GM12878 (cell line): ENCODE measurements at regions of chr2 and their contacts with region 1.

Region 1: GRCh38 chr2:153519257-153519875 is 40.8 kb upstream of the RPRM start:
- DNase-seq: peak; percentile 8
- ATAC-seq: peak; percentile 50
- H3K4me3 ChIP-seq: no peak overlapping the region
- H3K27ac ChIP-seq: no peak overlapping the region
- H3K4me1 ChIP-seq: no peaks in the 10 kb centered on the region
- H3K27me3 ChIP-seq: no peaks in the 10 kb centered on the region
- CTCF ChIP-seq: peak; percentile 59 to 70 (median 67); a peak in 5 of 6 replicates
- EP300 ChIP-seq: no peak
- POLR2A ChIP-seq: no peak
- RAD21 ChIP-seq: peak; percentile 76

Region 2: DNA sequence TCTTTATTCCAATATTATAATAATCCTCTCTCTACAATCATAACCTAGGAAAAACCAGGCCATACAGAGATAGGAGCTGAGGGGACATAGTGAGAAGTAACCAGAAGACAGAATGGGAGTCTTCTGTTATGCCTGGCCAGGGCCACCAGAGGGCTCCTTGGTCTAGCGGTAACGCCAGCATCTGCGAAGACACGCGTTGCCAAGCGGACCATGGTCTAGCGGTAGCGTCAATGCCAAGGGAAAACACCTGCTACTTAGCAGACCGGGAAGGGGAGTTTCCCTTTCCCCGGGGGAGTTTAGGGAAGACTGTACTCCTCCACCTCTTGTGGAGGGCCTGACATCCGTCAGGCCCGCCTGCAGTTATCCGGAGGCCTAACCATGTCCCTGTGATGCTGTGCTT is 764.3 kb before region 1 on chr2:
- CTCF ChIA-PET with region 1: no interaction called
- POLR2A ChIA-PET with region 1: no interaction called
- RAD21 ChIA-PET with region 1: no interaction called
- SMC1A ChIA-PET with region 1: no interaction called
- in situ Hi-C with region 1: no loop called
- intact Hi-C with region 1: loop called (anchors 5 kb)
- DNase-seq: peak; percentile 26
- ATAC-seq: peak; percentile 53
- H3K4me3 ChIP-seq: no peak overlapping the region
- H3K27ac ChIP-seq: no peak overlapping the region
- H3K4me1 ChIP-seq: no peaks in the 10 kb centered on the region
- H3K27me3 ChIP-seq: no peaks in the 10 kb centered on the region
- CTCF ChIP-seq: peak; percentile 35 to 66 (median 60); a peak in 5 of 6 replicates
- EP300 ChIP-seq: no peak
- POLR2A ChIP-seq: no peak
- RAD21 ChIP-seq: no peak

Region 3: DNA sequence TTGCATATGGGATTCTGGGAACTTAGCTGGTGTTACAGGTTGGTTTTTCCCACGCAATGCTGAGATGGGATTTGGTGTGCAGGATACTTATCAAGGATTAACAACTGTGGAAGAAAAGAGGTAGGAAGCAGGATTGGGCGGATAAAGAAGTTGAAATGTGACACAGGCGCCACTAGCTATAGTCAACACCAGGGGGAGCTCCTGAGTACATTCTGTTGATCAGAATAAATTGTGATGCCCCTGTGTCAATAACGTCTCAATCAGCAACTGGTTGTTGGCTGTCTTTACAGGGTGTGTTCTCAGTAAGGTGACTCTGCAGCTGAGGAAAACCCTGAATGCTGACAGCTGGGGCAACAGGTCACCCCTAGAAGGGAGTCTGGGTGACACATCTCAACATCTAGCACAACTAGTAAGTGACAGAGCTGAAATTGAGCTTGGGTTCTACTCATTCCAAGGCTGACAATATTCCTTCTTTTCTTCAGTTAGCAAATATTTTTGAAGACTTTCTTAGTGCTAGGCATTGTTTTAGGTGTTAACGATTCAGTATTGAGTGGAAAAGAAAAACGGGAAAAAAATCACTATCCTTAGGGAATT is 657.9 kb before region 1 on chr2:
- CTCF ChIA-PET with region 1: interaction called, 3 read pairs
- POLR2A ChIA-PET with region 1: no interaction called
- RAD21 ChIA-PET with region 1: no interaction called
- SMC1A ChIA-PET with region 1: no interaction called
- in situ Hi-C with region 1: no loop called
- intact Hi-C with region 1: loop called (anchors 1 kb)
- DNase-seq: no peak
- ATAC-seq: peak; percentile 70
- H3K4me3 ChIP-seq: no peak overlapping the region
- H3K27ac ChIP-seq: no peak overlapping the region
- H3K4me1 ChIP-seq: no peaks in the 10 kb centered on the region
- H3K27me3 ChIP-seq: no peaks in the 10 kb centered on the region
- CTCF ChIP-seq: peak; percentile 23 to 66 (median 38)
- EP300 ChIP-seq: no peak
- POLR2A ChIP-seq: no peak
- RAD21 ChIP-seq: peak; percentile 26; the same call in 1 of the 2 replicates

Region 4: GRCh38 chr2:152925547-152926327 is 593.6 kb before region 1 on chr2:
- CTCF ChIA-PET with region 1: interaction called, 16 read pairs
- POLR2A ChIA-PET with region 1: no interaction called
- RAD21 ChIA-PET with region 1: interaction called, 3 read pairs
- SMC1A ChIA-PET with region 1: interaction called, 3 read pairs
- in situ Hi-C with region 1: loop called (anchors 5 kb)
- intact Hi-C with region 1: loop called (anchors 1 kb)
- DNase-seq: peak; percentile 11
- ATAC-seq: peak; percentile 98
- H3K4me3 ChIP-seq: no peak overlapping the region
- H3K27ac ChIP-seq: no peak overlapping the region
- H3K4me1 ChIP-seq: no peaks in the 10 kb centered on the region
- H3K27me3 ChIP-seq: no peaks in the 10 kb centered on the region
- CTCF ChIP-seq: peak; percentile 65 to 86 (median 81)
- EP300 ChIP-seq: no peak
- POLR2A ChIP-seq: no peak
- RAD21 ChIP-seq: peak; percentile 79

Region 5: DNA sequence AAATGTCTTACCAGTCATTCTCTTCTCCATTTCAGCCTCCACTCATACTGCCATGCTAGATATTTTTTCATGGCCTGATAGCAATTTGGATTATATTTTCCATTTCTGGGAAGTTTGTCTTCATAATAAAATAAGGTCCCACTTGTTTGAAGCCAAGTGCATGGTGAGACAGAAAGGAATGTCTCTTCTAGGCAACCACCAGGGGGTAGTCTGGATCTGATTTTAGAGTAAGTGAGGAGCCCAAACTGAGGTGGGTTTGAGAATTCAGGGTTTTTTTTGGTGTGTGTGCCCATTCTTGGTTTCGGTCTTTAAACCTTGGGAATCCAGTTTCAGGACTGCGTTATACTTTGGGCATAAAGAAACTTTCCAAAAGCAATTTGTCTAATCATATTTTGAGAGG is 356.3 kb before region 1 on chr2:
- CTCF ChIA-PET with region 1: interaction called, 6 read pairs
- POLR2A ChIA-PET with region 1: no interaction called
- RAD21 ChIA-PET with region 1: no interaction called
- SMC1A ChIA-PET with region 1: interaction called, 3 read pairs
- in situ Hi-C with region 1: loop called (anchors 10 kb)
- intact Hi-C with region 1: loop called (anchors 1 kb)
- DNase-seq: no peak
- ATAC-seq: peak; percentile 79
- H3K4me3 ChIP-seq: no peak overlapping the region
- H3K27ac ChIP-seq: no peak overlapping the region
- H3K4me1 ChIP-seq: no peaks in the 10 kb centered on the region
- H3K27me3 ChIP-seq: no peaks in the 10 kb centered on the region; a peak in 1 of 4 replicates
- CTCF ChIP-seq: peak; percentile 48 to 55 (median 51); a peak in 5 of 6 replicates
- EP300 ChIP-seq: no peak
- POLR2A ChIP-seq: no peak
- RAD21 ChIP-seq: peak; percentile 73

Region 6: DNA sequence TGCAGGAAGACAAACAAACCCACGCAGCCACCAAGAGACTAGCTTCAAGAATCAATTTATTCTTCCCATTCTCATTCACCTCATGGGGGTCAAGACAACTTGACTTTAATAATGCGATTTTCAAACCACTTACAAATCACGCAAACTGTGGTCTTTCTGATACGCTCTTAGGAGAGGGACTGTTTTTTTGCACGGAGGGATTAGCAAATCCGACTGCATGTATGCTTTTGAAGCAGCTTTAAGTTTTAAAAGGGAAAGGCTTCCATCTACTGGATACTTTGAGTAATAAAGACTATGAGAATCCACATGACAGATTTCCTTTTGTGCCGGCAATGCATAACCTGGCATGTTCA is 856.2 kb after region 1 on chr2:
- CTCF ChIA-PET with region 1: no interaction called
- POLR2A ChIA-PET with region 1: no interaction called
- RAD21 ChIA-PET with region 1: interaction called, 3 read pairs
- SMC1A ChIA-PET with region 1: no interaction called
- in situ Hi-C with region 1: no loop called
- intact Hi-C with region 1: loop called (anchors 10 kb)
- DNase-seq: no peak
- ATAC-seq: peak; percentile 73
- H3K4me3 ChIP-seq: no peak overlapping the region
- H3K27ac ChIP-seq: no peak overlapping the region
- H3K4me1 ChIP-seq: no peaks in the 10 kb centered on the region
- H3K27me3 ChIP-seq: no peaks in the 10 kb centered on the region
- CTCF ChIP-seq: peak in 2 of 3 experiments; percentile 9 to 19; a peak in 2 of 6 replicates
- EP300 ChIP-seq: no peak
- POLR2A ChIP-seq: no peak
- RAD21 ChIP-seq: peak; percentile 35; the same call in 1 of the 2 replicates